Activated CD8-positive, alpha-beta T cell treated with anti-CD3 and anti-CD28 coated beads for 36 hours (primary cell): ENCODE measurements at regions of chr20 and their contacts with region 1.

Region 1: DNA sequence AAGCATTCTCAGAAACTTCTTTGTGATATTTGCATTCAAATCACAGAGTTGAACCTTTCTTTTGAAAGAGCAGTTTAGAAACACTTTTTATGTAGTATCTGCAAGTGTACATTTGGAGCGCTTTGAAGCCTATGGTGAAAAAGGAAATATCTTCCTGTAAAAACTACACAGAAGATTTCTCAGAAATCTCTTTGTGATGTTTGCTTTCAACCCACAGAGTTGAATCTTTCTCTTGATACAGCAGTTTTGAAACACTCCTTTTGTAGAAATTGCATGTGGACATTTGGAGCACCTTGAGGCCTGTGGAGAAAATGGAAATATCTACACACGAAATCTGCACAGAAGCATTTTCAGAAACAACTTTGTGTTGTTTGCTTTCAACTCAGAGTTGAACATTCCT is 612.3 kb upstream of the ZNF337 start:
- DNase-seq: no peak
- ATAC-seq: peak; percentile 27
- H3K4me3 Mint-ChIP-seq: no peak overlapping the region
- H3K27ac Mint-ChIP-seq: peak overlapping the region; percentile 82
- H3K4me1 Mint-ChIP-seq: peaks cover 60% of the 10 kb centered on the region
- H3K27me3 Mint-ChIP-seq: no peaks in the 10 kb centered on the region
- CTCF ChIP-seq: no peak

Region 2: DNA sequence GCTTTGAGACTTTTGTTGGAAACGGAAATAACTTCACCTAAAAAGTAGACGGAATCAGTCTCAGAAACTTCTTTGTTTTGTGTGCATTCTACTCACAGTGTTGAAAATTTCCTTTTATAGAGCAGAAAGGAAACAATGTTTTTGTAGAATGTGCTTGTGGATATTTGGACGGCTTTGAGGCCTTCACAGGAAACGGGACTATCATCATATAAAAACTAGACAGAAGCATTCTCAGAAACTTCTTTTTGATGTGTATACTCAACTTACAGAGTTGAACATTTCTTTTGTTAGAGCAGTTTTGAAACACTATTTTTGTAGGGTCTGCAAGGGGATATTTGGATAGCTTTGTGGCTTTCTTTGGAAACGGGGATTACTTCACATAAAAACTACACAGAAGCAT is 15.2 kb after region 1 on chr20:
- CTCF ChIA-PET with region 1: no interaction called
- POLR2A ChIA-PET with region 1: no interaction called
- intact Hi-C with region 1: no loop called
- DNase-seq: no peak
- ATAC-seq: no peak
- H3K4me3 Mint-ChIP-seq: no peak overlapping the region
- H3K27ac Mint-ChIP-seq: peak overlapping the region; percentile 16
- H3K4me1 Mint-ChIP-seq: peaks cover 24% of the 10 kb centered on the region
- H3K27me3 Mint-ChIP-seq: no peaks in the 10 kb centered on the region
- CTCF ChIP-seq: no peak

Region 3: GRCh38 chr20:26347396-26347795 is 38.4 kb after region 1 on chr20:
- CTCF ChIA-PET with region 1: no interaction called
- POLR2A ChIA-PET with region 1: no interaction called
- intact Hi-C with region 1: loop called (anchors 5 kb)
- DNase-seq: no peak
- ATAC-seq: no peak
- H3K4me3 Mint-ChIP-seq: no peak overlapping the region
- H3K27ac Mint-ChIP-seq: no peak overlapping the region
- H3K4me1 Mint-ChIP-seq: peaks cover 27% of the 10 kb centered on the region
- H3K27me3 Mint-ChIP-seq: no peaks in the 10 kb centered on the region
- CTCF ChIP-seq: no peak